ENCODE measurements at regions of chr9 and their contacts with region 1.

Region 1: DNA sequence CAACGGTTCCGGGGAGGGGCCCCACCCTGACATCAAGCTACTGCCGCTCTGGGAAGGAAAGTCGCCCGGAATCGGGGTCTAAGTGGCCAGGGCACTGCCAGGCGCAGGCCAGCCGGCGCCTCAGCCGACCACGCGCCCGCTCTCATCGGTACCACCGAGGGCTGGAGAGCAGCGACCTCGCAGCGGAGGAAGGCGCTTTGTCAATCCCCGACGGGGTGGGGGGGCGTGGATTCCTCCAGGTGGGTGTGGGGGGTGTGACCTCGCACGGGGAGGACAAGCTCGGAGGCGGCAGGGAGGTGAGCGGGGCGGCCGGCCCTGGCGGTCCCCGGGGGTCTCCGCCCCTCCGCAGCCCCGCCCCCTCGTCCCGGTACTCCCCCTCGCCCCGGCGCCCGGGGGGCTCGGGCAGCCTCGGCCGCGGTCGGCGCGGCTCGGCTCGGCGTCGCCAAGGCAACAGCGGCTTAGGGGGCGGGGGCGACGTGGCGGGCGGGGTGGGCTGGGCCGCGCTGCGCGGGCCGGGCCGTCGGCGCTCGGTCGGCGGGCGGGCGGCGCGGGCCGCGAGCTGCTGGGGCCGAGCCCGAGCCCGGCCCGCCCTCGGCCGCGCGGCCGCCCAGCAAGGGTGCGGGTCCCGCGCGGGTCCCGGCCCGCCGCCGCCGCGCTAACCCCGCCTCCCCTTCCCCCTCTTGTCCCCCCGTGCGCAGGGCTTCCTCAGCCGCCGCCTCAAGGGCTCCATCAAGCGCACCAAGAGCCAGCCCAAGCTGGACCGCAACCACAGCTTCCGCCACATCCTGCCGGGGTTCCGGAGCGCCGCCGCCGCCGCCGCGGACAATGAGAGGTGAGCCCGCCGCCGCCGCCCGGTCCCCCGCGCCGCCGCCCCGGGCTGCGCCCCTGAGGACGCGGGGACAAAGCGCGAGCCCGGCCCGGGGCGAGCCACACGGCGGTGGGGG is 47.5 kb downstream of the DAB2IP start:
- DNase-seq: peak; percentile 77
- ATAC-seq: peak; percentile 66
- H3K4me3 Mint-ChIP-seq: peak overlapping the region; percentile 56
- H3K27ac Mint-ChIP-seq: no peak overlapping the region
- H3K4me1 Mint-ChIP-seq: peaks cover 35% of the 10 kb centered on the region
- H3K27me3 Mint-ChIP-seq: peaks cover 3% of the 10 kb centered on the region; the same call in 1 of the 2 replicates
- CTCF ChIP-seq: no peak

Region 2: DNA sequence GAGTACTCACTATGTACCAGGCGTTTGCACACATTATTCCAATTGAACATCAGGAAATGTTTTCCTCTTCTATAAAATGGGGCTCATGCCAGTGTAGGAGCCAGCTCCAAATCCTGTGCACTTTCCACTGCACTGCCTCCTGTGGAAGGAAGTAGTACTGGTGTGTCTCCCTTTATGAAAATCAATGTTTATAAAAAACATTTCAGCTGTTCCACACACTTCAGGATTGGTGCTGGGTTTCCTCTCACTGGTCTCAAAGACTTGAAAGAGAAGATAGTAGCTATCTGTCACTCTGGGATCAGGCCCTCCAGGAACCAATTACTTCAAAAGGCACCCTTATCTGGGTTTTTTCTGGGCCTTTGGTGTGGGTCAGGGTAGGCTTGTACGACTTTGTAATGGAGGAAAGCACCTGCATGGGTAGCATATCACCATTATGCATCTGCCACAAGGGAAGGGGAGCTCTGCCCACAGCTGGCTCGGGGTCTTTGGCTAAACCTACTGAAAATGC is 529.8 kb before region 1 on chr9:
- CTCF ChIA-PET with region 1: no interaction called
- POLR2A ChIA-PET with region 1: no interaction called
- DNase-seq: no peak
- ATAC-seq: peak; percentile 50
- H3K4me3 Mint-ChIP-seq: no peak overlapping the region
- H3K27ac Mint-ChIP-seq: no peak overlapping the region
- H3K4me1 Mint-ChIP-seq: peaks cover 4% of the 10 kb centered on the region; the same call in 1 of the 2 replicates
- H3K27me3 Mint-ChIP-seq: no peaks in the 10 kb centered on the region
- CTCF ChIP-seq: no peak; the same call in 1 of the 2 replicates

Region 3: DNA sequence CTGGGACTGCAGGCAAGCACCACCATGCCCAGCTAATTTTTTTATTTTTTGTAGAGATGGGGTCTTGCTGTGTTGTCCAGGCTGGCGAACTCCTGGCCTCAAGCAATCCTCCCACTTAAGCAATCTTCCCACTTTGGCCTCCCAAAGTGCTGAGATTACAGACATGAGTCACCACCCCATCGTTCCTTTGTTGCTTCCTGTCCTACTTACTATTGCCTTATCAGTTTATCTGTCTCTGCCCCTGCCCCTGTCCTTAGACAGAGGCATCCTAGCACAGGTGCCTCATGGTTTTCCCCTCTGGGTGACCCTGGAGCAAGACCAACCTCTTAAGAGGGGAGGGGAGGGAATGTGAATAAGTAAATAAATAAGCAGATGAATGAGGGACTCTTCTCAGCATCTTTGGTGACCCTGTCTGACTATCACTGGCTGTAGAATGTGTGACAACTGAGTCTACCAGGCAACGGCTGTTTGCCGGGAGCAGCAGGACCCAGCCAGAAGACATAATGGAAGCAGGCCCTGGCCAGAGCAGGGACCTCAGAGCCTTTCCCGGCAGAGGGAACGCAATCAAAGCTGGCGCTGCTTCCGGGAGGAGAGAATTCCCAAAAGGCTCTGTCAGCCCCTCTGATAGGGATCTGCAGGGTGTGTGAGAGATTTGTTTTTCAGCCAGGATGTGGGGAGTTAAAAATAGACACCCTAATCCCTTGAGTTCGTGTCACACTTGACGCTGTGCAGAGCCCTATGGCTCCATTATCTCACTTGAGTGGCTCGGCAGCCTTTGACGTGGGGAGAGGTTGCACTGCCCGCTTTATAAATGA is 91.3 kb before region 1 on chr9:
- CTCF ChIA-PET with region 1: no interaction called
- POLR2A ChIA-PET with region 1: no interaction called
- DNase-seq: no peak
- ATAC-seq: no peak
- H3K4me3 Mint-ChIP-seq: no peak overlapping the region
- H3K27ac Mint-ChIP-seq: peak overlapping the region; percentile 7; the same call in 1 of the 2 replicates
- H3K4me1 Mint-ChIP-seq: peaks cover 44% of the 10 kb centered on the region
- H3K27me3 Mint-ChIP-seq: no peaks in the 10 kb centered on the region
- CTCF ChIP-seq: no peak

Region 4: DNA sequence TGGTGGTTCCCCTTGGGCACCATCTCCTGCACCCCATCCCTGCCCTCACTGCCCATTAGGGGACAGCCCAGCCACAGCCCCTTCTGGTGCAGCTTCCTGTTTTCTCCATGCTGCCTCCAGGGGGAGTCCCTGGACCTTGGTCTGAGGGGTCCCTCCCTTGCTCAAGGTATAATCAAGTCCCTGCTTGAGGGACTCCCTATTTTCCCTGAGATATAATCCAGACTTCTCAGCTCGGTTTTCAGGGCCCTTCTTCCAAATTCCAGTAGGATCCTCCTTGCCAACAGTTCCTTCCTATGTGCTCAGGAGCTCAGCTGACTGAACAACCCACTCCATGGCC is 77.8 kb before region 1 on chr9:
- CTCF ChIA-PET with region 1: interaction called, 16 read pairs
- POLR2A ChIA-PET with region 1: no interaction called
- DNase-seq: peak; percentile 74
- ATAC-seq: peak; percentile 97
- H3K4me3 Mint-ChIP-seq: no peak overlapping the region
- H3K27ac Mint-ChIP-seq: peak overlapping the region; percentile 32
- H3K4me1 Mint-ChIP-seq: peaks cover 20% of the 10 kb centered on the region
- H3K27me3 Mint-ChIP-seq: no peaks in the 10 kb centered on the region
- CTCF ChIP-seq: no peak

Region 5: DNA sequence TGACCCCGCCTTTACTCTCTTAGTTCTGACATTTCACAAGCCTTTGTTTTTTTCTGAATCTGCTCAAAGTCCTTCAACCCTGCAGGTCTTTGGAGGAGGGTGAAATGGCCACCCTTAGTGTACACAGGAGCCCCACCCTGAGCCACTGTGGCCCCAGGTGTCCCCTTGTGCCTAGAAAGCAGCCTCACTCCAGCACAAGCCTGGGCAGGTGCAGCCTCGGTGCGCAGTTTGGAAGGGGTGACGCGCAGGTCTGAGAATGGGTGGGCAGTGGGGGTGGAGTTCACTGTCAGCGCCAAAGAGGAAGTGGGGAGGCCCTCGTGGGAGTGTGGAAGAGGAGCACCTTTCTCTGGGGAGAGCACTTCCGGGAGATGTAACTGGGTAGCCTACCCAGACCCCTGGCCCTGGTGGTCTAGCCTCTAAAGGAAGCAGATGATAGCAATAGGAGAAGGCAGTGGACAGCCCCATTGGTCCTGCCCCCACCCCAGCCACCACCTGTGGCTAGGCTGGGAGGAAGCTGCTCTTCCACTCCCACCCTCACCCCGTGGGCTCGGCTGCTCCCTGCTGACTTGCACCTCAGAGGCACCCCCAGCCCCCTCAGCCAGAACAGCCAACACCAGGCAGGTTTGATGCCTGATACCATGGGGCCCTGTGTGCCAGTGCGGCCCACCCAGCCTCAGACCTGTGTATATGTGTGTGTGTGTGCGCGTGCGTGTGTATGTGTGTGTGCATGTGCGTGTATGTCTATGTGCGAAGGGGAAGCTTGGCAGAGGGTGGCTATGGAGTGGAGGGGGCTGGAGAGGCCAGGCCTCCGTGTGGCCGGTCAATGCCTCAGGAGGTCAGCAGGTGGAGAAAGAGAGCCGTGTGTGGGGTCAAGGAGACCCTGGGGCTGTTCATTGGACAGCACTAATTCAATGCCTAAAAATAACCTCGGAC is 64.3 kb before region 1 on chr9:
- CTCF ChIA-PET with region 1: interaction called, 28 read pairs
- POLR2A ChIA-PET with region 1: no interaction called
- DNase-seq: peak; percentile 70
- ATAC-seq: peak; percentile 88
- H3K4me3 Mint-ChIP-seq: no peak overlapping the region
- H3K27ac Mint-ChIP-seq: peak overlapping the region; percentile 64
- H3K4me1 Mint-ChIP-seq: peaks cover 48% of the 10 kb centered on the region
- H3K27me3 Mint-ChIP-seq: no peaks in the 10 kb centered on the region
- CTCF ChIP-seq: peak; percentile 37

Region 6: GRCh38 chr9:121650217-121651007 is 48.5 kb before region 1 on chr9:
- CTCF ChIA-PET with region 1: interaction called, 11 read pairs
- POLR2A ChIA-PET with region 1: no interaction called
- DNase-seq: peak; percentile 89
- ATAC-seq: peak; percentile 62
- H3K4me3 Mint-ChIP-seq: peak overlapping the region; percentile 79
- H3K27ac Mint-ChIP-seq: peak overlapping the region; percentile 78; the same call in 1 of the 2 replicates
- H3K4me1 Mint-ChIP-seq: peaks cover 73% of the 10 kb centered on the region
- H3K27me3 Mint-ChIP-seq: peaks cover 9% of the 10 kb centered on the region; the same call in 1 of the 2 replicates
- CTCF ChIP-seq: no peak

Region 7: DNA sequence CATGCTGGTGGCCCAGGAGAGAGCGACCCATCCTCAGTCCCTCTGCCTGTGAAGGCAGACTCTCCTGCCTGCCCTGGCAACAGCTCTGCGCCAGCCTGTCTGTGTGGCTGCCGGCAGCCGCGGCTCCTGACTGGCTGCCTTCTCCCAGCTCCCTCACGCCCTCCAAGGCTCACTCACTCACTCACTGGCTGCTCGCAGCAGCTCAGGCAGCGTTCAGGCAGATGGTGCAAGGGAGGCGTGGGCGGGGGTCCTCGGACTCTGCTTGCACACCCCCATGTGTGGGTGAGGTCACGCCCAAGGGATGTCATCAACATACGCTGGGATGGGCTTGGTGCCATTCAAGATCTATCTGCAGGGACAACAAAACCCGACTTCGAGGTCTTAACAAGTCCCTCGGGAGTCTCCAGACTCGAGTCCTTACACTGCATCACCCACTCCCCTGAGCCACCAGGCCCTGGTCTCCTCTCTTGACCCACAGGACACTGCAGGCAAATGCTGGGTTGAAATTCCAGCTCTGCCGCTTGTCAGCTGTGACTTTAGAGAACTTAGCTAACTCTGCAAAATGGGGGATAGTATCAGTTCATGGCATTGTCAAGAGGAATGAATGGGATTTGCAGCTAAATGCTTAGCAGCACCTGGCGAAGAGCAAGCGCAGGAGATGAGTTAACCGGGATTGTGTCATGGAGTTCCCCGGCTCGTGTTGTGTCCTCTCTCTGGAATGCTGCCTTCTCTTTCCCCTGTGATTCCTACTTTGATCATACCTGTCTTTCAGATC is 19.4 kb after region 1 on chr9:
- CTCF ChIA-PET with region 1: interaction called, 44 read pairs
- POLR2A ChIA-PET with region 1: interaction called, 3 read pairs
- DNase-seq: no peak
- ATAC-seq: peak; percentile 52
- H3K4me3 Mint-ChIP-seq: no peak overlapping the region
- H3K27ac Mint-ChIP-seq: peak overlapping the region; percentile 45; the same call in 1 of the 2 replicates
- H3K4me1 Mint-ChIP-seq: peaks cover 53% of the 10 kb centered on the region
- H3K27me3 Mint-ChIP-seq: no peaks in the 10 kb centered on the region
- CTCF ChIP-seq: no peak